Activated CD4-positive, alpha-beta memory T cell treated with anti-CD3 and anti-CD28 coated beads for 36 hours (primary cell): ENCODE measurements at regions of chr3 and their contacts with region 1.

Region 1: GRCh38 chr3:114308830-114309229 is 15.0 kb downstream of the TIGIT start:
- DNase-seq: peak; percentile 83
- H3K4me3 Mint-ChIP-seq: peak overlapping the region; percentile 70
- H3K27ac Mint-ChIP-seq: peak overlapping the region; percentile 99
- H3K4me1 Mint-ChIP-seq: peaks cover 77% of the 10 kb centered on the region
- H3K27me3 Mint-ChIP-seq: no peaks in the 10 kb centered on the region

Region 2: GRCh38 chr3:113531826-113532697 is 776.8 kb before region 1 on chr3 and contains the start of gene SIDT1:
- CTCF ChIA-PET with region 1: no interaction called
- POLR2A ChIA-PET with region 1: no interaction called
- intact Hi-C with region 1: loop called (anchors 10 kb)
- DNase-seq: peak; percentile 79
- H3K4me3 Mint-ChIP-seq: peak within 1 kb of the TSS; percentile 98
- H3K27ac Mint-ChIP-seq: peak within 1 kb of the TSS; percentile 96
- H3K4me1 Mint-ChIP-seq: peaks cover 45% of the 10 kb centered on the region
- H3K27me3 Mint-ChIP-seq: peaks cover 1% of the 10 kb centered on the region
- total RNA-seq, gene SIDT1: 11.3 TPM

Region 3: DNA sequence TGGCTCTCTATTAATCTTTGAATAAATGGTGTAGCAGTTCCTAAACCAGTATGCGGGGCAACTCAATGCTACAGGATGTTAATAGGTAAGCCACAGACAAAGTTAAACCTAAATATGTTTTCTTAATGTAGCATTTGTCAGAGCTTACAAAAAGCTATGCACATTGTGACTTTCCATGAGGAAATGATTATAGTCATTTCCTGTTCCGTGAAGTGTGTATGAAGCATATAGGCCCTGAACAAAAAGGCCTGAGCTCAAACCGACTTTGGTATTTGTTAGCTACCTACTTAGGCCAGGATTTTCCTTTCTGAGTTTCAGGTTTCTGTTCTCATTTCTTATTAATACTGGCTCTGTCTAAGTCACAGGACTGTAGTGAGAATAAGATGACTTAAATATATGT is 85.7 kb before region 1 on chr3:
- CTCF ChIA-PET with region 1: interaction called, 5 read pairs
- POLR2A ChIA-PET with region 1: interaction called, 18 read pairs
- intact Hi-C with region 1: loop called (anchors 1 kb)
- DNase-seq: no peak
- H3K4me3 Mint-ChIP-seq: no peak overlapping the region
- H3K27ac Mint-ChIP-seq: peak overlapping the region; percentile 92
- H3K4me1 Mint-ChIP-seq: peaks cover 90% of the 10 kb centered on the region
- H3K27me3 Mint-ChIP-seq: no peaks in the 10 kb centered on the region

Region 4: GRCh38 chr3:114319453-114319852 is 10.6 kb after region 1 on chr3:
- CTCF ChIA-PET with region 1: interaction called, 3 read pairs
- POLR2A ChIA-PET with region 1: interaction called, 14 read pairs
- intact Hi-C with region 1: loop called (anchors 1 kb)
- DNase-seq: no peak
- H3K4me3 Mint-ChIP-seq: no peak overlapping the region
- H3K27ac Mint-ChIP-seq: no peak overlapping the region
- H3K4me1 Mint-ChIP-seq: peaks cover 85% of the 10 kb centered on the region
- H3K27me3 Mint-ChIP-seq: no peaks in the 10 kb centered on the region

Region 5: GRCh38 chr3:114329823-114330222 is 21.0 kb after region 1 on chr3:
- CTCF ChIA-PET with region 1: interaction called, 6 read pairs
- POLR2A ChIA-PET with region 1: interaction called, 14 read pairs
- intact Hi-C with region 1: loop called (anchors 1 kb)
- DNase-seq: no peak
- H3K4me3 Mint-ChIP-seq: peak overlapping the region; percentile 35
- H3K27ac Mint-ChIP-seq: peak overlapping the region; percentile 84
- H3K4me1 Mint-ChIP-seq: peaks cover 91% of the 10 kb centered on the region
- H3K27me3 Mint-ChIP-seq: no peaks in the 10 kb centered on the region

Region 6: GRCh38 chr3:114336122-114336697 is 27.4 kb after region 1 on chr3:
- CTCF ChIA-PET with region 1: interaction called, 6 read pairs
- POLR2A ChIA-PET with region 1: interaction called, 7 read pairs
- intact Hi-C with region 1: loop called (anchors 1 kb)
- DNase-seq: no peak
- H3K4me3 Mint-ChIP-seq: no peak overlapping the region
- H3K27ac Mint-ChIP-seq: peak overlapping the region; percentile 70
- H3K4me1 Mint-ChIP-seq: peaks cover 75% of the 10 kb centered on the region
- H3K27me3 Mint-ChIP-seq: no peaks in the 10 kb centered on the region

Region 7: GRCh38 chr3:114504941-114505632 is 196.3 kb after region 1 on chr3:
- CTCF ChIA-PET with region 1: no interaction called
- POLR2A ChIA-PET with region 1: no interaction called
- intact Hi-C with region 1: loop called (anchors 5 kb)
- DNase-seq: no peak
- H3K4me3 Mint-ChIP-seq: no peak overlapping the region
- H3K27ac Mint-ChIP-seq: no peak overlapping the region
- H3K4me1 Mint-ChIP-seq: peaks cover 31% of the 10 kb centered on the region
- H3K27me3 Mint-ChIP-seq: peaks cover 14% of the 10 kb centered on the region

Region 8: GRCh38 chr3:114597013-114597412 is 288.2 kb after region 1 on chr3:
- CTCF ChIA-PET with region 1: no interaction called
- POLR2A ChIA-PET with region 1: no interaction called
- intact Hi-C with region 1: no loop called
- DNase-seq: no peak
- H3K4me3 Mint-ChIP-seq: no peak overlapping the region
- H3K27ac Mint-ChIP-seq: no peak overlapping the region
- H3K4me1 Mint-ChIP-seq: no peaks in the 10 kb centered on the region
- H3K27me3 Mint-ChIP-seq: no peaks in the 10 kb centered on the region